ENCODE measurements at regions of chr6 and their contacts with region 1.

Region 1: GRCh38 chr6:118934461-118935330 is at the start of gene MCM9:
- DNase-seq: peak; percentile 93
- ATAC-seq: peak; percentile 89
- H3K4me3 ChIP-seq: peak within 1 kb of the TSS; percentile 91 to 99 (median 94)
- H3K4me3 Mint-ChIP-seq: peak within 1 kb of the TSS; percentile 92
- H3K27ac ChIP-seq: peak within 1 kb of the TSS; percentile 83 to 90
- H3K27ac Mint-ChIP-seq: peak within 1 kb of the TSS; percentile 92
- H3K4me1 ChIP-seq: peaks cover 10 to 18% of the 10 kb centered on the region in 2 donors
- H3K4me1 Mint-ChIP-seq: peaks cover 35% of the 10 kb centered on the region
- H3K27me3 ChIP-seq: no peaks in the 10 kb centered on the region
- H3K27me3 Mint-ChIP-seq: no peaks in the 10 kb centered on the region
- CTCF ChIP-seq: no peak
- total RNA-seq, gene MCM9: 51.0 and 54.5 TPM in 2 replicates

Region 2: GRCh38 chr6:119078376-119079282 is 143.9 kb after region 1 on chr6 and contains the start of gene FAM184A:
- CTCF ChIA-PET with region 1: no interaction called
- POLR2A ChIA-PET with region 1: no interaction called
- intact Hi-C with region 1: loop called (anchors 10 kb)
- DNase-seq: peak; percentile 78
- ATAC-seq: peak; percentile 71
- H3K4me3 ChIP-seq: peak within 1 kb of the TSS; percentile 49 to 68 (median 58)
- H3K4me3 Mint-ChIP-seq: peak within 1 kb of the TSS; percentile 91
- H3K27ac ChIP-seq: no peak within 1 kb of the TSS
- H3K27ac Mint-ChIP-seq: no peak within 1 kb of the TSS
- H3K4me1 ChIP-seq: peaks cover 6 to 12% of the 10 kb centered on the region in 2 donors
- H3K4me1 Mint-ChIP-seq: peaks cover 12% of the 10 kb centered on the region
- H3K27me3 ChIP-seq: peaks cover 2 to 25% (median 15%) of the 10 kb centered on the region in 4 experiments
- H3K27me3 Mint-ChIP-seq: peaks cover 26% of the 10 kb centered on the region
- CTCF ChIP-seq: peak; percentile 20
- total RNA-seq, gene FAM184A: 0.27 and 0.54 TPM in 2 replicates

Measured in B cell (primary cell).